GM12878 (cell line): ENCODE measurements at regions of chr4 and their contacts with region 1.

Region 1: GRCh38 chr4:96558466-96558865 is 718.6 kb downstream of the PDHA2 start:
- DNase-seq: no peak
- ATAC-seq: no peak
- H3K4me3 ChIP-seq: no peak overlapping the region
- H3K27ac ChIP-seq: no peak overlapping the region
- H3K4me1 ChIP-seq: no peaks in the 10 kb centered on the region
- H3K27me3 ChIP-seq: no peaks in the 10 kb centered on the region
- CTCF ChIP-seq: no peak
- EP300 ChIP-seq: no peak
- POLR2A ChIP-seq: no peak
- RAD21 ChIP-seq: no peak

Region 2: GRCh38 chr4:96509039-96509741 is 49.3 kb before region 1 on chr4:
- CTCF ChIA-PET with region 1: no interaction called
- POLR2A ChIA-PET with region 1: no interaction called
- RAD21 ChIA-PET with region 1: no interaction called
- SMC1A ChIA-PET with region 1: no interaction called
- in situ Hi-C with region 1: no loop called
- intact Hi-C with region 1: loop called (anchors 1 kb)
- DNase-seq: no peak
- ATAC-seq: no peak
- H3K4me3 ChIP-seq: no peak overlapping the region
- H3K27ac ChIP-seq: no peak overlapping the region
- H3K4me1 ChIP-seq: no peaks in the 10 kb centered on the region
- H3K27me3 ChIP-seq: no peaks in the 10 kb centered on the region
- CTCF ChIP-seq: no peak
- EP300 ChIP-seq: no peak
- POLR2A ChIP-seq: no peak
- RAD21 ChIP-seq: no peak